ENCODE measurements at regions of chr1 and their contacts with region 1.

Region 1: DNA sequence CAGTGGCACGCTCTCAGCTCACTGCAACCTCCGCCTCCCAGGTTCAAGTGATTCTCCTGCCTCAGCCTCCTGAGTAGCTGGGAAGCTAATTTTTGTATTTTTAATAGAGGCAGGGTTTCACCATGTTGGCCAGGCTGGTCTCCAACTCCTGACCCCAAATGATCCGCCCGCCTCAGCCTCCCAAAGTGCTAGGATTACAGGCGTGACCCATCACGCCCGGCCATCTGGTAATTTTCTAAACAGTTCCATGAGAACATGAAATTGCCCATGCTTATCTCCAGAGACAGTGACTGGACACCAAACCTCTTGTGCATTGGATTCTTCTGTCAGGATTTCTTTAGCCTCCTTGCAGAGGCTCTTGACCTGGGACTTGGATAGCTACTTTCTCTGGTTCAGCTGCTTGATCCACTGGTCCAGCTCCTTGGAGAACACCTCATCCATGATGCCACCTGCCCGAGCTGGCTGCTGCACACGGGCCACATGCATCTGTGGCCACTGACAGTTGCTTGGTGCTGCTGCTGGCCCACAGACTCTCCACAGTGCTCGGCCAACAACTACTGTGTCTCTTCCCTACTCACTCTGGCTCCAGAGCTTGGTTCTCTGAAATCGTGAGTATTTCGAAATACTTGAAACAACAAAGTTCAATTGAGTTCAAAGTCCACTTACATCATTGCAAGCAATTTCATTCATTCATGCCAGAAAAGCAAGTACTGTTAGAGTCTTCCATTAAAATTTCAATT is 40.0 kb upstream of the CTPS1 start:
- DNase-seq: no peak
- ATAC-seq: no peak
- H3K4me3 ChIP-seq: no peak overlapping the region
- H3K4me3 Mint-ChIP-seq: no peak overlapping the region
- H3K27ac ChIP-seq: no peak overlapping the region
- H3K27ac Mint-ChIP-seq: no peak overlapping the region
- H3K4me1 ChIP-seq: no peaks in the 10 kb centered on the region
- H3K4me1 Mint-ChIP-seq: no peaks in the 10 kb centered on the region
- H3K27me3 ChIP-seq: no peaks in the 10 kb centered on the region
- H3K27me3 Mint-ChIP-seq: peaks cover 3 to 4% of the 10 kb centered on the region in 2 donors

Region 2: DNA sequence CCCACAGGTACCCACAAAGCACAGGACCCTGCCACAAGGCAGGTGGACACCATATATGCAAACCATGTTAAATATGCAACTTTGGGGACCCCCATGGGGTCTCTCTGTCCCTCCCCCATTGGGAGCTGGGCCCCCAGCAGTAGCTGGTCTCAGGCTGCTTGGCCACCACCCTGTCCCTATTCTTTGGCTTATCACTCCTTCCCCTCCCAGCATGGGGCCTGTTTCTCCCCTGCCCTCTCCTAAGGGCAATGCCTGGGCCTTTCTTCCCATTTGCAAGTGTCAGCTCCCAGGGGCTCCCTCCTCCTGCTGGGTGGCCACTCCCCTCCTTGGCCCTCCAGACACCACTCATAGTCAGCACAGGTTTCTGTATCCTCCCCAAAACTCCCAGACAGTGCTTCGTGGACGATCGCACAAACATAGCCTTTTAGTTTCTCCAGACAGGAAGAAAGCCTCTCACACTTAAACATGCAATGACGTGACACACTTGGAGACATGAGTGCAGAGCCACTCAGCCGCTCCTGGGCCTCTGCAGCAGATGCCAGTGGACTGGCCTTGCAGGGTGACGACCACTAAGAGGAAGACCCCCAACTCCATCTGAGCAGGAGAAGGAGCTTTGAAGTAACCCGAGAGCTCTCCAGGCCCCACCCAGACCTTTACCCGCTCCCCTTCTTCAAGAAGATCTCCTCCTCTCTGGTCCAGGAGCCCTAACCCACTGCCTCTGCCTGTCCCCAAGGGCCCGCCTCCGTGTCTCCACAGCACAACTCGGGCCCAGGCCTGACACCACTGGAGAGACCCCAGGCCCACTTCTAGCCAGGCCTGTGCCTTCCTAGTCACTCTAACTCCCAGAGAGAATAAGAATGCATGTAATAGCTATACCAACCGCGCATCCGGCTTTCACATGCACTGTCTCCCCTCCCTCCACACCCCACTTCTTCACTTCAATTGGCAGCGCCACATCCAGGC is 100.2 kb before region 1 on chr1:
- CTCF ChIA-PET with region 1: no interaction called
- POLR2A ChIA-PET with region 1: interaction called in 1 of 2 experiments, 11 read pairs
- DNase-seq: no peak
- ATAC-seq: no peak
- H3K4me3 ChIP-seq: no peak overlapping the region
- H3K4me3 Mint-ChIP-seq: peak overlapping the region in 1 of 3 donors; percentile 28
- H3K27ac ChIP-seq: no peak overlapping the region
- H3K27ac Mint-ChIP-seq: peak overlapping the region in 1 of 2 donors; percentile 16
- H3K4me1 ChIP-seq: peaks cover 13 to 22% of the 10 kb centered on the region in 2 experiments
- H3K4me1 Mint-ChIP-seq: peaks cover 18 to 32% (median 27%) of the 10 kb centered on the region in 3 donors
- H3K27me3 ChIP-seq: peaks cover 0 to 11% of the 10 kb centered on the region in 2 experiments
- H3K27me3 Mint-ChIP-seq: no peaks in the 10 kb centered on the region